ENCODE measurements at regions of chrX and their contacts with region 1.

Region 1: DNA sequence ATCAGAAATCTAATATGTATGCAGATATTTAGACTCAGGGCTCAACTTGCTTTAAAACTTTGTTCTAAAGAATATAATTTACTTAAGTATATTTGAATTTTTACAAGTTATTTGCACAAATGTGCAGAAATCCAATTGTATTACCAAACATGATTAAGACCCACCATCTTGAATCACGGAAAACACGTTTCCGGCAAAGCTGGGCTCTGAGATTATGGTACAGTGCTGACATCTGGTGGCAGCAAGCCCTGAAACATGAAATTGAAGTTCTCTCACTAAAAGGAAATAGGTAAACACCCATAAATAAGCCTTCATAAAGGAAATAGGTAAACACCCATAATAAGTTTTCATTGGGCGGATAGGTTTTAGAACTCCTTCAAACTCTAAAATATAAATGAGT is 98.3 kb upstream of the MAOA start:
- DNase-seq: peak; percentile 21
- H3K4me3 ChIP-seq: no peak overlapping the region
- H3K27ac ChIP-seq: no peak overlapping the region
- H3K4me1 ChIP-seq: peaks cover 4% of the 10 kb centered on the region
- H3K27me3 ChIP-seq: no peaks in the 10 kb centered on the region
- CTCF ChIP-seq: peak; percentile 69

Region 2: DNA sequence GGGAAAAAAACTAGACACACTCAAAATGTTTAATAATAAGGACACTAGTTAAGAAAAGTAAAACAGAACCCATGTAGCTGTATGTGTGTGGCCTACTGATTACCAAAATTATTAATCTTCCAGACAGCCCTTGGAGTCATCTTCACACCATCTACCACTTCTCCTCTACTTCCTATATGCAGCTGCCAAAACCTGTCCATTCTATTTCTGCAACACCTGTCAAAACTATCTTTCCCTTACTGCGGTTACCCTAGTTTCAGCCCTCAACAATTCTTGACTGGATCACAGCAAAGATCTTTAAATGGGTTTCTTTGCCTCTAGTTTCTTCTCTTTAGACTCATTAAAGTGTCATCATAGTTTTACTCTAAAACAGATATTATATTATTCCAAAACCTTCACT is 1761.2 kb before region 1 on chrX:
- intact Hi-C with region 1: loop called (anchors 10 kb)
- DNase-seq: no peak
- H3K4me3 ChIP-seq: no peak overlapping the region
- H3K27ac ChIP-seq: no peak overlapping the region
- H3K4me1 ChIP-seq: no peaks in the 10 kb centered on the region
- H3K27me3 ChIP-seq: no peaks in the 10 kb centered on the region
- CTCF ChIP-seq: no peak

Region 3: DNA sequence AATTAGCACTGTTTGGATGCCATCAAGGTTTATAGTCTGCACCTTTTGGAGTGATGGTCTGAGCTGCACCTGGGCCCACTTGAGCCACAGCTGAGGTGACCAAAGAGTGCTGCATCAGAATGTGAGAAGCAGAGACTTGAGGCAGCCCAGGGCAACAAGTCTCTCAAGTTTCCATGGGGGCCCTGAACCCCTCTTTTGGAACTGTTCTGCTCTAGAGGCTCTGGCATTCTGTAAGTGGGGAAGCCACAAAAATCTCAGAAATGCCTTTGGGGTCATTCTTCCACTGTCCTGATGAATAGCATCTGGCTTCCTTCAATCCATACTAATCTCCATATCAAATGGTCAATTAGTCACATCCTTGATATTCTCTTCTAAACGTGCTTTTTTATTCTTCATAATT is 200.1 kb before region 1 on chrX:
- intact Hi-C with region 1: loop called (anchors 10 kb)
- DNase-seq: no peak
- H3K4me3 ChIP-seq: no peak overlapping the region
- H3K27ac ChIP-seq: no peak overlapping the region
- H3K4me1 ChIP-seq: no peaks in the 10 kb centered on the region
- H3K27me3 ChIP-seq: no peaks in the 10 kb centered on the region
- CTCF ChIP-seq: no peak

Region 4: DNA sequence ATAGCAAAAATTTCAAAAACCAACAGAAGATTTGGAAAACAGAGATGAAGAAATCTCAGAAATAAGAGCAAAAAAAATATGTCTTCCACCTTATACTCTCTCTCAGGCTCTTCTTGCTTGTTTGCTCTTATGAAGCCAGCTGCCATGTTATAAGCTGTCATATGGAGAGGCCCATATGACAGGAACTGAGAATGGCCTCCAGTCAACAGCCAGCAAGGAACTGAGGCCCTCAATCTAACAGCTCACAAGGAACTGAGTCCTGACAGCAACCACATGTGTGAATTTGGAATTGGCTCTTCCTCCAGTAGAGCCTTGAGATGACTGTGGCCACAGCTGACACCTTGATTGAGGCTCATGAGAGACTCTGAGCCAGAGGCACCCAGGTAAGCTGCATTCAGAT is 47.0 kb after region 1 on chrX:
- intact Hi-C with region 1: no loop called
- DNase-seq: no peak
- H3K4me3 ChIP-seq: no peak overlapping the region
- H3K27ac ChIP-seq: no peak overlapping the region
- H3K4me1 ChIP-seq: no peaks in the 10 kb centered on the region
- H3K27me3 ChIP-seq: no peaks in the 10 kb centered on the region
- CTCF ChIP-seq: no peak

Region 5: DNA sequence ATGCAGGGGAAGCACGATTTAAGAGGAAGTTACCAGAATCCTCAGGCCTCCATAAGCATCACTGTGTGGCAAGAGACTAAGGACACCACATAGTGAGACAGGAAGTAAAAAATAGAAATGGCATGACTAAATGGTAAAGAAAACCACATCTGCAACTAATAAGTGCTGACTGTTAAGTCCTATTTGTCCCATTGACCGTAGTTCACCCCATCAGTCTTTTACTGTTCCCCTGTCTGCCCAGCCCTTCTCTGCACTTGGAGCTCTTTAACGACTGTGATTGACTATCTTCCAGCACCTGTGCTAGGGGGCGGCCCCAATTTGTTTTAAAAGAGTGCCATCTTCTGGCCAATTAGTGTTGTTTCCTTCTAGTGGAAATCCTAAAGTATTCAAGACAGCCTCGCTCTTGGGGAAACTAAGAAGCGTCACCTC is 192.5 kb after region 1 on chrX:
- intact Hi-C with region 1: loop called (anchors 2 kb)
- DNase-seq: no peak
- H3K4me3 ChIP-seq: no peak overlapping the region
- H3K27ac ChIP-seq: no peak overlapping the region
- H3K4me1 ChIP-seq: no peaks in the 10 kb centered on the region
- H3K27me3 ChIP-seq: no peaks in the 10 kb centered on the region
- CTCF ChIP-seq: peak; percentile 68

Measured in left ventricle myocardium inferior (tissue), 1 donor.